ENCODE measurements at regions of chr1 and their contacts with region 1.

Region 1: GRCh38 chr1:156767101-156767878 is at the start of gene PRCC:
- DNase-seq: peak; percentile 99
- ATAC-seq: peak; percentile 89
- H3K4me3 ChIP-seq: peak within 1 kb of the TSS; percentile 76 to 97 (median 86)
- H3K4me3 Mint-ChIP-seq: no peak within 1 kb of the TSS
- H3K27ac ChIP-seq: peak within 1 kb of the TSS; percentile 91 to 97
- H3K27ac Mint-ChIP-seq: no peak within 1 kb of the TSS
- H3K4me1 ChIP-seq: peaks cover 27 to 29% of the 10 kb centered on the region in 2 donors
- H3K4me1 Mint-ChIP-seq: peaks cover 30% of the 10 kb centered on the region
- H3K27me3 ChIP-seq: no peaks in the 10 kb centered on the region
- H3K27me3 Mint-ChIP-seq: no peaks in the 10 kb centered on the region
- CTCF ChIP-seq: no peak
- total RNA-seq, gene PRCC: 83.4 and 91.0 TPM in 2 replicates

Region 2: DNA sequence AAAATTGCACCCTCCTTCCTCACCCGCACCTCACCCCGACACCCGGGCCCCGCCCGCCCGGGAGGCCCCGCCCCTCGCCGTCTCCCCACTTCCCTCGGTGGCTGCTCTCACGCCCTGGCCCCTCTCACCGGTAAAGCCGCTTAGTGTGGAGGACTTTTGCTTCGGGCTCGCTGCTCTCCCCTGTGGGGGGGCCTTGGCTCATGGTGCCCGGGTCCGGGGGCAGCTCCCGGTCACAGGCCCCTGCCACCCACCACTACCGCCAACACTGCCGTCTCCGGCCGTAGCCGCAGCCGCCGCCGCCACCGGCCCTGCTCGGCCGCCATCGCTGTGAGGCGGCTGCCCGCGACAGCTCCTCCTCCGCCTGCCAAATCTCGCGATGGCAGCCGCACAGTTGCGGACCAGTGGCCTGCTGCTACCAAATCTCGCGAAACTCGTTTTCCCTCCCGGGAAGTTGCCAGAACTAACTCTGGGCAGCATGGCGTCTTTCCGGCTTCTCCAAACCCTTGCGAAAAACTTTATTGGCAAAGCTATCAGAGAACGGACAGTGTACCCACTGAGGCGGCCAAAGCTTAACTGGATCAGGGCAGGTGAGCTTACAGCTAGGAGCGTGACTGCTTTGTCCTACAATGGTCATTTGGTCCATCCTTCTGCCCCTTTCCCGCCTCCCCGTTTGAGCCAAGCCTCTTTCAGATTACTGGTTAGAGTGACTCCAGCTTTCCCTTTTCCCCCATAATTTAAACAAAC is 484.6 kb before region 1 on chr1 and contains the start of gene SMG5:
- CTCF ChIA-PET with region 1: no interaction called
- POLR2A ChIA-PET with region 1: no interaction called
- intact Hi-C with region 1: loop called (anchors 1 kb)
- DNase-seq: peak; percentile 98
- ATAC-seq: peak; percentile 93
- H3K4me3 ChIP-seq: peak within 1 kb of the TSS; percentile 74 to 99 (median 86)
- H3K4me3 Mint-ChIP-seq: peak within 1 kb of the TSS; percentile 98
- H3K27ac ChIP-seq: peak within 1 kb of the TSS; percentile 79 to 89
- H3K27ac Mint-ChIP-seq: peak within 1 kb of the TSS; percentile 98
- H3K4me1 ChIP-seq: peaks cover 20 to 28% of the 10 kb centered on the region in 2 donors
- H3K4me1 Mint-ChIP-seq: peaks cover 39% of the 10 kb centered on the region
- H3K27me3 ChIP-seq: no peaks in the 10 kb centered on the region
- H3K27me3 Mint-ChIP-seq: no peaks in the 10 kb centered on the region
- CTCF ChIP-seq: no peak
- total RNA-seq, gene SMG5: 74.0 and 77.0 TPM in 2 replicates

Region 3: GRCh38 chr1:156601122-156601830 is 166.0 kb before region 1 on chr1 and contains the start of gene GPATCH4:
- CTCF ChIA-PET with region 1: no interaction called
- POLR2A ChIA-PET with region 1: no interaction called
- intact Hi-C with region 1: loop called (anchors 1 kb)
- DNase-seq: peak; percentile 84
- ATAC-seq: peak; percentile 74
- H3K4me3 ChIP-seq: peak within 1 kb of the TSS; percentile 85 to 100 (median 99)
- H3K4me3 Mint-ChIP-seq: peak within 1 kb of the TSS; percentile 97
- H3K27ac ChIP-seq: peak within 1 kb of the TSS; percentile 72 to 83
- H3K27ac Mint-ChIP-seq: peak within 1 kb of the TSS; percentile 96
- H3K4me1 ChIP-seq: peaks cover 22 to 30% of the 10 kb centered on the region in 2 donors
- H3K4me1 Mint-ChIP-seq: peaks cover 38% of the 10 kb centered on the region
- H3K27me3 ChIP-seq: no peaks in the 10 kb centered on the region
- H3K27me3 Mint-ChIP-seq: no peaks in the 10 kb centered on the region
- CTCF ChIP-seq: no peak
- total RNA-seq, gene GPATCH4: 31.4 and 38.3 TPM in 2 replicates

Region 4: GRCh38 chr1:156676820-156677615 is 90.3 kb before region 1 on chr1 and contains the start of gene NES:
- CTCF ChIA-PET with region 1: no interaction called
- POLR2A ChIA-PET with region 1: no interaction called
- intact Hi-C with region 1: no loop called
- DNase-seq: peak; percentile 49
- ATAC-seq: no peak
- H3K4me3 ChIP-seq: peak within 1 kb of the TSS in 1 of 5 experiments; percentile 24
- H3K4me3 Mint-ChIP-seq: peak within 1 kb of the TSS; percentile 62
- H3K27ac ChIP-seq: no peak within 1 kb of the TSS
- H3K27ac Mint-ChIP-seq: peak within 1 kb of the TSS; percentile 57
- H3K4me1 ChIP-seq: peaks cover 21 to 23% of the 10 kb centered on the region in 2 donors
- H3K4me1 Mint-ChIP-seq: peaks cover 19% of the 10 kb centered on the region
- H3K27me3 ChIP-seq: peaks cover 0 to 79% (median 46%) of the 10 kb centered on the region in 4 experiments
- H3K27me3 Mint-ChIP-seq: peaks cover 56% of the 10 kb centered on the region
- CTCF ChIP-seq: no peak
- total RNA-seq, gene NES: 0.05 TPM in 1 of 2 replicates, not detected in the other

Region 5: GRCh38 chr1:156712626-156713025 is 54.7 kb before region 1 on chr1:
- CTCF ChIA-PET with region 1: no interaction called
- POLR2A ChIA-PET with region 1: no interaction called
- intact Hi-C with region 1: no loop called
- DNase-seq: no peak
- ATAC-seq: no peak
- H3K4me3 ChIP-seq: no peak overlapping the region
- H3K4me3 Mint-ChIP-seq: no peak overlapping the region
- H3K27ac ChIP-seq: no peak overlapping the region
- H3K27ac Mint-ChIP-seq: no peak overlapping the region
- H3K4me1 ChIP-seq: no peaks in the 10 kb centered on the region
- H3K4me1 Mint-ChIP-seq: no peaks in the 10 kb centered on the region
- H3K27me3 ChIP-seq: no peaks in the 10 kb centered on the region
- H3K27me3 Mint-ChIP-seq: no peaks in the 10 kb centered on the region
- CTCF ChIP-seq: no peak

Region 6: GRCh38 chr1:156740679-156741612 is 26.3 kb before region 1 on chr1 and contains the start of gene MRPL24:
- CTCF ChIA-PET with region 1: interaction called, 18 read pairs
- POLR2A ChIA-PET with region 1: interaction called, 43 read pairs
- intact Hi-C with region 1: loop called (anchors 1 kb)
- DNase-seq: peak; percentile 98
- ATAC-seq: peak; percentile 90
- H3K4me3 ChIP-seq: peak within 1 kb of the TSS; percentile 45 to 85 (median 71)
- H3K4me3 Mint-ChIP-seq: peak within 1 kb of the TSS; percentile 96
- H3K27ac ChIP-seq: peak within 1 kb of the TSS; percentile 77 to 95
- H3K27ac Mint-ChIP-seq: peak within 1 kb of the TSS; percentile 98
- H3K4me1 ChIP-seq: peaks cover 15 to 21% of the 10 kb centered on the region in 2 donors
- H3K4me1 Mint-ChIP-seq: peaks cover 37% of the 10 kb centered on the region
- H3K27me3 ChIP-seq: no peaks in the 10 kb centered on the region
- H3K27me3 Mint-ChIP-seq: no peaks in the 10 kb centered on the region
- CTCF ChIP-seq: no peak
- total RNA-seq, gene MRPL24: 34.6 and 41.1 TPM in 2 replicates

Region 7: DNA sequence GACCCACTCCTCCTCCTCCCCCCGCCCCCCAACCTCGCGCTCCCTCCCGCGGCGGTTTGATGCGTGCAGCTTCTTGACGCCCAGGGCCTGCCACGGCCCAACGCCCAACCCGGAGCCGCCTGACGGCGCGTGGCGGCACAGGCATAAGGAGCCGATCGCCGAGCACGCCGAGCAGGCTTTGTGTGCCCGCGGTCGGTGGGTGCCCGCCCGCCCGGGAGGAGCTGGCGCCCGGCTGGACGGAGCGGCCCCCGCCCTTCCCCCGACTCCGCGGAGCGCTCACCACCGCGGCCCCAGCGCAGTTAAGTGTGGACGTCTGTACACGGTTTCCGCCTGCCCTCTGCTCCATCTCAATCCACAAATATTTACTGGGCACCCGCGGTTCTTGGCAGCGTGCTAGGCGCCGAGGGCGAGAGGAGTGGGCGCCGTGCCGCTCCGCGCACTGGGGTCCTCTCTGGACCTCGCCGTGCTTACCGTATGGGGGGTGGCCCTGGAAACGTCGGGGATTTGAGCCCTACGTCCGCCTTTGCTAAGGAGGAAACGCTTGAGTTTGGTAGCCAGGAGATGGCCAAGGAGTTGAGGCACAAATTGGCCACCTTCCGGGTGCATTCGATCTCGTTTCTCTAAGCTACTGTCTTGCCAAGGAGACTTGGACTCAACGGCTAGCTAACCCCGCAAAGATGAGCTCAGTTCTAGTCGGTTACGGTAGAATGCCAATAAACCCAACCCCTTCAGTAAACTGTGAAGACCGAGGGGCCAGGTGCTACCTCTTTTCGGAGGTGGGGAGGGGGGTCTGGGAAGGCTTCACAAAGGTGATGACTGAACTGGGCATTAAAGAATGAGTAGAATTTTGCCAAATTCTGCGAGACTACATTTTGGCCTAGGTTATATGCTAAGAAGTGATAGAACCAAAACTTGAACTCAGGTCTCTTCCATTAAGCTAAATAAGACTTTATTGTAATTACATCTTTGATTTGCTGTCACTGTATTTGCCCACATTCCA is 15.2 kb before region 1 on chr1:
- CTCF ChIA-PET with region 1: interaction called, 15 read pairs
- POLR2A ChIA-PET with region 1: interaction called, 24 read pairs
- intact Hi-C with region 1: loop called (anchors 1 kb)
- DNase-seq: peak; percentile 95
- ATAC-seq: peak; percentile 88
- H3K4me3 ChIP-seq: peak overlapping the region; percentile 72 to 95 (median 86)
- H3K4me3 Mint-ChIP-seq: peak overlapping the region; percentile 93
- H3K27ac ChIP-seq: peak overlapping the region; percentile 58 to 82
- H3K27ac Mint-ChIP-seq: peak overlapping the region; percentile 94
- H3K4me1 ChIP-seq: peaks cover 46 to 62% of the 10 kb centered on the region in 2 donors
- H3K4me1 Mint-ChIP-seq: peaks cover 63% of the 10 kb centered on the region
- H3K27me3 ChIP-seq: no peaks in the 10 kb centered on the region
- H3K27me3 Mint-ChIP-seq: no peaks in the 10 kb centered on the region
- CTCF ChIP-seq: no peak

Region 8: GRCh38 chr1:157274698-157275534 is 507.6 kb after region 1 on chr1:
- CTCF ChIA-PET with region 1: no interaction called
- POLR2A ChIA-PET with region 1: no interaction called
- intact Hi-C with region 1: no loop called
- DNase-seq: no peak
- ATAC-seq: no peak
- H3K4me3 ChIP-seq: no peak overlapping the region
- H3K4me3 Mint-ChIP-seq: no peak overlapping the region
- H3K27ac ChIP-seq: no peak overlapping the region
- H3K27ac Mint-ChIP-seq: no peak overlapping the region
- H3K4me1 ChIP-seq: peaks cover 36 to 44% of the 10 kb centered on the region in 2 donors
- H3K4me1 Mint-ChIP-seq: peaks cover 24% of the 10 kb centered on the region
- H3K27me3 ChIP-seq: peaks cover 0 to 32% (median 15%) of the 10 kb centered on the region in 4 experiments
- H3K27me3 Mint-ChIP-seq: peaks cover 10% of the 10 kb centered on the region
- CTCF ChIP-seq: no peak

Measured in B cell (primary cell).